Right ventricle myocardium inferior (tissue), 1 donor: ENCODE measurements at regions of chr15 and their contacts with region 1.

Region 1: GRCh38 chr15:39580117-39580484 is 778 bp upstream of the THBS1 start:
- DNase-seq: peak; percentile 95
- ATAC-seq: peak; percentile 92

Region 2: DNA sequence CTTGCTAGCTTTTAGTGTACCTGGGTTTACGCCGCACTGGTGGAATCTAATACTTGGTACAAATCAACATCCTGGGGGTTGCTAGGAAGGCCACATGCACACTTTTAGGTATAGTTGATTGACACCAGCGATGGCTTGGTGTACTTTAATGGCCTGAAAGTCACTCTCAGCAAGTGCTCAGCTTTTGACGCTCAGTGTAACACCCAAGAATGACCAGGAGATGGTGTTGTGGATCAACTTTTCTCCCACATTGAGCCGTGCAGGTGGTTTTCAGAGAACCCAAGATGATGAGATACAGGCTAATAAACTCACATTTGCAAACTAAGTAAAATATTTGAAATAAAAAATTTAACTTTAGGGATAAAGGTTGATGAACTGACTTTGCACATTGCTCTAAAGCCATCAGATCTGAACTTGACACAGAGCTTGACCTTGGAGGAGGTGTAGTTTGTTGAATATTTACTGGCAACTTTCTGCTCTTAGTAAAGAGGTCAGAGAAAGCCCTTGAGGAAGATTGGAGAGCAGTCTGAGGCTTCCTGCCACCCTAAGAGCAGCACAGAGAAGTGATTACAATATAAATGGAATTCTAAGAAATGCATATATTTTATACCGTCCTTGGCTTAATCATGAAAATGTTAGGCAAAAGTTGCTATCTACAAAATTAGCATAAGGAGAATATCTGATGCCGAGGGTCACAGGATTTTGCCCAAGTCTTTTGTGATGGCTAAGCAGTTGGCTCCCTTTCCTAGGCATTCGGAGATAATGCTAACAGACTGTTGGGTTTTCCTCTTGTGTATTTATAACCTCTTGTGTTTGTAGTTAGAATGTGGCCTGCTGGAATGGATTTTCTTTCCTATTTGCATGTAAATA is 872.1 kb before region 1 on chr15:
- intact Hi-C with region 1: loop called (anchors 5 kb)
- DNase-seq: no peak
- ATAC-seq: peak; percentile 70

Region 3: DNA sequence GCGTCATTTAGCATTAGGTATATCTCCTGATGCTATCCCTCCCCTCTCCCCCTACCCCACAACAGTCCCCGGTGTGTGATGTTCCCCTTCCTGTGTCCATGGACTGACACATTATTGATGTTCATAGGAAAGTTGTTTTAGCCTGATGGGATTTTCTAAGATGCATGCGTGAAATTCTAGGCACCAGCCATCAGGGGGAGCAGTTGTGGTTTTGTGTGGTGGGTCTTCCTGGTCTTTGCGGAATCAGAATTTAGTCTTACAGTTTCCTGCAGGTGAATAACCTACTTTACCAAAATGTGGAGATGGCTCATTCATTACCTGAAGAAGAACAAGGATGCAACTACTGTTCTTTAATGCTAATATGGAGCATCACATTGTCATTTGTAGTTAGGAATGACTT is 454.2 kb before region 1 on chr15:
- intact Hi-C with region 1: loop called (anchors 5 kb)
- DNase-seq: no peak
- ATAC-seq: no peak

Region 4: DNA sequence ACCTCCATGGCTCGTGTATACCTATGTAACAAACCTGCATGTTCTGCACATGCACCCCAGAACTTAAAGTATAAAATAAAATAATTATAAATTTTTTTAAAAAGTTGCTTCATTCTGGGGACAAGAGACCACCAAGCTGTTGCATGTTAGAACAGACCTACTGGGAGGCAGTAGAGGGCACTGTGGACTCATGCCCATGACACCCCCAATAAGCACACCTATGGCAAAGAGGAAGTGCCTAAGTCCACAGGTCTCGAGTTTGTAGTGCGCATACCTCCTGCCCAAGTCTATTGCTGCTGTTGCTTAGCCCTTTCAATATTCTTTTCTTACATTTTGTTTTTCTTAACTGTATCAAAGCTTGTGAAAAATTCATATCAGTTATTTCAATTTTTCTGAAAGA is 267.1 kb before region 1 on chr15:
- intact Hi-C with region 1: loop called (anchors 2 kb)
- DNase-seq: no peak
- ATAC-seq: no peak

Region 5: DNA sequence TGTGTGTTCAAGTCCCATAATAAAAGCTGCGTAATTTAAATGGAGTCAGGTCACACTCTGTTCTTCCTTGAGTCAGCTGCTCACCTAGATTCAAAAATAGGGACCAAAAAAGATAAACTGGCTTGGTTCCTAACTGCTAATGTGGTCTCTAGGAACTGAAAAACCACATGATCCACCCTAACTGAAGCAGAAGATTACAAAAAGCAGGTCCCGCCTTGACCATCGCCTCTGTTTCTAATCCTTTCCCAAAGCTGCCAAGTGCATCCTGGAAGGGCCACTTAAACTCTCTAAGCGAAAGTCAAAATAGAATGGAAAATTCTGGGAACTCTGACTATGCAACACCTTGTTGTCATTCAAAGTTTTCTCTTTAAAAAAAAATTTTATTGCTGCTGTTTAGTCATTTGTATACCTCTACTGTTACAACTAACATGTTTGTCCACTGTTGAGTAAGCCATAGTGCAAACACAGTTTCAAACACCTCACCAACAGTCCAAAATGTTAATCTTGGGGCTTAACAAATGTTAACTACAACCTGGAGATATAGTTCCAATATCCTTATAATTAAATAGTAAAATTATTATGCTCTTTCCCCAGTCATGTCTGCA is 88.1 kb before region 1 on chr15:
- intact Hi-C with region 1: loop called (anchors 5 kb)
- DNase-seq: no peak
- ATAC-seq: peak; percentile 34

Region 6: DNA sequence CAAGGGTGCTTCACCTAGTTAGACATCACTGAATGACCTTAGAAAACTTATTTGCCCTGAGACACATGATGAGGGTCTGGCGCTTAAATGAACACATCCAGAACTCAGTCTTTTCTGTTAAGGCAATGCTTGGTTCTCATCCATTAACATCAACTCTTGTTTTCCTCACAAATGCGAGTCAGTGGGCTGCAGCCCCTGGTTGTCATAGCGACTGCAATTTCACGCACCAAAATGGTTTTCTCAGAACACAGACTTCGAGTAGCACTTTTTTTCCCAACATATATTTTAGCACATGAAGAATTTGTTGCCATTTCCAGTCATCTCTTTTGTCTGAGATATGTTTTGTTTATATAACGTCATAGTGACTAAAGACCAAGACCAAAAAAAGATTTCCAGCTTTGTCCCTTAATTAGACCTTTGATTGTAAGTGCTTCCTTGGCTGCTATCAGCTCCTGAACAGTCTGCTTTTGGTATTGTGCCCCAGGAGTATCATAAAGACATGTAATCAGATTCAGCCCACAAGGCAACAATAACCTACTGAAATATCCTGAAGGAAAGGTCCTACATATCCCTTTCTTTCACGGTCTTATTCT is 271.5 kb after region 1 on chr15:
- intact Hi-C with region 1: no loop called
- DNase-seq: no peak
- ATAC-seq: no peak